Breast epithelium (tissue), 4 donors: ENCODE measurements at regions of chr3 and their contacts with region 1.

Region 1: GRCh38 chr3:1183320-1184048 is 90.7 kb downstream of the CNTN6 start:
- DNase-seq: no peak
- H3K4me3 ChIP-seq: no peak overlapping the region
- H3K27ac ChIP-seq: no peak overlapping the region
- H3K4me1 ChIP-seq: no peaks in the 10 kb centered on the region
- H3K27me3 ChIP-seq: no peaks in the 10 kb centered on the region
- CTCF ChIP-seq: no peak
- POLR2A ChIP-seq: no peak

Region 2: GRCh38 chr3:1269808-1270207 is 86.3 kb after region 1 on chr3:
- intact Hi-C with region 1: loop called (anchors 2 kb)
- DNase-seq: no peak
- H3K4me3 ChIP-seq: no peak overlapping the region
- H3K27ac ChIP-seq: no peak overlapping the region
- H3K4me1 ChIP-seq: no peaks in the 10 kb centered on the region
- H3K27me3 ChIP-seq: no peaks in the 10 kb centered on the region
- CTCF ChIP-seq: no peak
- POLR2A ChIP-seq: no peak

Region 3: DNA sequence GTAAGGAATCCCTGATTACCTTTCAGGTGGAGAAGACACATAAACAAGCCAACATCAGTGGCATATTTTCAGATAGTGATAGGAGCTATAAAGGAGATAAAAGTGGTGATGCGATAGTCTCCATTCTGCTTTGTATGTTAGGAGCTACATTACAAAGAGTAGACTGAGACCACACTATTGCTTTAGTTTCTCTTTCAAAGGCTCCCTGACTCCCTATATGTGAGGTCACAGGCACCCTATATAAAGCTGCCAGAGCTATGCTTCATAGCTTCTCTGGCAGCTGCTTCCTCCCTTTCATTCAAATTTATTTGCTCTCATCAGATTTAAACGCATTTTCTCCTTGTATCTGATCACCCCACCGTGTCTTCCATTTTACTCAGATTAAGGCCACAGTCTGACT is 1460.1 kb after region 1 on chr3:
- intact Hi-C with region 1: no loop called
- DNase-seq: no peak
- H3K4me3 ChIP-seq: no peak overlapping the region
- H3K27ac ChIP-seq: no peak overlapping the region
- H3K4me1 ChIP-seq: no peaks in the 10 kb centered on the region
- H3K27me3 ChIP-seq: no peaks in the 10 kb centered on the region
- CTCF ChIP-seq: no peak
- POLR2A ChIP-seq: no peak